Activated CD8-positive, alpha-beta T cell treated with anti-CD3 and anti-CD28 coated beads, Interleukin-2, amount 10 ng/mL, durations not matched to agents 7 days and 5 days (primary cell): ENCODE measurements at regions of chr11 and their contacts with region 1.

Region 1: GRCh38 chr11:128349650-128350299 is 237.6 kb downstream of the ETS1 start:
- DNase-seq: no peak
- ATAC-seq: no peak
- H3K4me3 Mint-ChIP-seq: peak overlapping the region; percentile 35
- H3K27ac Mint-ChIP-seq: peak overlapping the region; percentile 79
- H3K4me1 Mint-ChIP-seq: peaks cover 41% of the 10 kb centered on the region
- H3K27me3 Mint-ChIP-seq: no peaks in the 10 kb centered on the region

Region 2: GRCh38 chr11:128365044-128365443 is 15.3 kb after region 1 on chr11:
- CTCF ChIA-PET with region 1: interaction called, 11 read pairs
- POLR2A ChIA-PET with region 1: interaction called, 4 read pairs
- DNase-seq: no peak
- ATAC-seq: no peak
- H3K4me3 Mint-ChIP-seq: no peak overlapping the region
- H3K27ac Mint-ChIP-seq: no peak overlapping the region
- H3K4me1 Mint-ChIP-seq: peaks cover 3% of the 10 kb centered on the region
- H3K27me3 Mint-ChIP-seq: no peaks in the 10 kb centered on the region